CD14-positive monocyte (primary cell): ENCODE measurements at regions of chr9 and their contacts with region 1.

Region 1: DNA sequence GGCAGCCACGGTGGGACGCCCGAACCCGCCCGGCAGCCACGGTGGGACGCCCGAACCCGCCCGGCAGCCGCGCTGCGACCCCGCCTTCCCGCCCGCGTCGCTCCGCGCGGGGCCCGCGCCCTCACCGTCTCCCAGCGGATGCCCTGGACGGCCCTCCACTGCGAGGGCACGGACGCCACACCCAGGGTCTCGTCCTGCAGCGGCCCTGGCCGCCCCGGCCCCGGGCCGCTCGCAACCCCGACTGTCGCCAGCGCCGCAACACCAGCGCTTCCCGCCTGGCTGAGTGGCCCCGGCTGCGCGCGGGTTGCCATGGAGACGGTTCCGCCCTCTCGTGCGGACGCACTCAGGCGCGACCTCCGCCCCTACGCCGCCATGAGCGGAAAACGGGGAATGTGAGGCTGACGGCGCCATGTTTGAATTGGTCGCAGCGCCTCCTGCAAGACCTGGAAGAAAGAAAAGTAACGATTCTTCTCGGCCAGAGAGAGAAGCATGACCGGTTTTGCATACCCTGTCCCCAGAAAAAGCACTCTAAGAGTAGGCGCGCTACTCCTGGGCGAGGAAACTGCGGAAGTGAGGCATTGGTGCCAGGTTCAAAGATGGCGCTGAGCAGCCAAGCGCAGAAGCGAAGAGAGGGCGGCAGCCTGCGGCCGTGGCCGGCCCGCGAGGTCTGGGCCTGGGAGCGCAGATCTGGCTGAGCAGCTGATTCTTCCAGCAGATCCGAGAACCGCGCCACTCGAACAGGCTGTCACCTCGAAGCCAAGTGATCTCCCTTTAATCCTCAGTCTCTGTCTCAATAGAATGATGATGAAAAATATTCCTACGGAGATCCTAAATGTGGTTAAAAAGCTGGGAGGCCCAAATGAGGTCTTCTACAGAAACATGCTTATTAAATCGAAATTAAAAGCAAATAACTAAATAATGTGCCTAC is at the start of gene DYNC2I2:
- DNase-seq: peak; percentile 94 to 96 (median 96)
- H3K4me3 ChIP-seq: peak within 1 kb of the TSS; percentile 62 to 80 (median 77)
- H3K4me3 Mint-ChIP-seq: peak within 1 kb of the TSS; percentile 84 to 98
- H3K27ac ChIP-seq: peak within 1 kb of the TSS; percentile 93 to 98
- H3K27ac Mint-ChIP-seq: peak within 1 kb of the TSS; percentile 98 to 100 (median 99)
- H3K4me1 ChIP-seq: peaks cover 11 to 14% of the 10 kb centered on the region in 2 donors
- H3K4me1 Mint-ChIP-seq: peaks cover 7% of the 10 kb centered on the region
- H3K27me3 ChIP-seq: no peaks in the 10 kb centered on the region
- H3K27me3 Mint-ChIP-seq: peaks cover 1 to 7% (median 2%) of the 10 kb centered on the region in 3 donors
- CTCF ChIP-seq: no peak
- polyA plus RNA-seq, gene DYNC2I2: 1.5 to 2.1 (median 1.9) TPM

Region 2: GRCh38 chr9:128683340-128684278 is 26.9 kb after region 1 on chr9:
- intact Hi-C with region 1: loop called (anchors 2 kb)
- DNase-seq: peak; percentile 43 to 63 (median 56)
- H3K4me3 ChIP-seq: peak overlapping the region; percentile 84 to 100 (median 96)
- H3K4me3 Mint-ChIP-seq: peak overlapping the region; percentile 99 to 100
- H3K27ac ChIP-seq: peak overlapping the region; percentile 83 to 97
- H3K27ac Mint-ChIP-seq: peak overlapping the region; percentile 95 to 98 (median 97)
- H3K4me1 ChIP-seq: peaks cover 49 to 55% of the 10 kb centered on the region in 2 donors
- H3K4me1 Mint-ChIP-seq: peaks cover 50% of the 10 kb centered on the region
- H3K27me3 ChIP-seq: no peaks in the 10 kb centered on the region
- H3K27me3 Mint-ChIP-seq: peaks cover 0 to 3% (median 2%) of the 10 kb centered on the region in 3 donors
- CTCF ChIP-seq: no peak

Region 3: DNA sequence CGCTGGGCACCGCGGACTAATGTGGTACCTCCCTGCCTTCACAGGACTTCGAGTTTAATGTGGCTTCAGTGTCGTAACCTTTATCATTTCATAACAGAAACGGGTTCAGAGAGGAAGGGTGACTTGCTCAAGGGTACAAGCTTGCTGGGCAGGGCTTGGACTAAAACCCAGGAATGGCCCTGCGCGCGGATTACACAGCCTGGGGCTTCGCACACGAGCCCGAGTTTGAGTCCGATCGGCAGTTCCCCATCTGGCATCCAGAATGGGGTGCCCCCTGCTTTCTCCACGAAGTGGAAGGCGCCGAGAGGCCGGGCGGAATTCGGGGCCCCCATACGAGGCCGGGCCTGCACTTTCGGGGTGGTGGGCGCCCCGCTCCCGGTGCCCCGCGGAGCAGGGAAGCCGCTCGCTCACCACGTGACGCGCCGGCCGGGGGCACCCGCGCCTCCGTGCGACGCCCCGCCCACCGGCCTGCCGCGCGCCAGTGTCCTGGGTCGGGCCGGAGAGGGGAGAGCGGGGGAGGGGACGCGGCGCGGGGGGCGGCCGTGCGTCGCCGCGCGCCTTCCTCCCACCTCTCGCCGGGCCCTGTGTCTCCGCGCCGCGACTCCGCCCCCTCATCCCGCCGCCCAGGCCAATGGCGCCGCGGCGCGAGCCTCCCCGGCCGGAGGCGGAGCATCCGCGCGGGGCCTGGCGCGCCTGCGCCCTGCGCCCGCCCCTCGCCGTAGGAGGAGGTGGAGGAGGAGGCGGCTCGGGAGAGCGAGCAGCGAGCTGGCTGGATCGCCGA is 32.0 kb after region 1 on chr9 and contains the start of gene SET:
- intact Hi-C with region 1: loop called (anchors 2 kb)
- DNase-seq: peak; percentile 85 to 86 (median 86)
- H3K4me3 ChIP-seq: peak within 1 kb of the TSS; percentile 45 to 90 (median 90)
- H3K4me3 Mint-ChIP-seq: peak within 1 kb of the TSS; percentile 73 to 88
- H3K27ac ChIP-seq: peak within 1 kb of the TSS; percentile 85 to 87
- H3K27ac Mint-ChIP-seq: peak within 1 kb of the TSS; percentile 78 to 95 (median 92)
- H3K4me1 ChIP-seq: peaks cover 55 to 62% of the 10 kb centered on the region in 2 donors
- H3K4me1 Mint-ChIP-seq: peaks cover 59% of the 10 kb centered on the region
- H3K27me3 ChIP-seq: no peaks in the 10 kb centered on the region
- H3K27me3 Mint-ChIP-seq: peaks cover 0 to 3% (median 2%) of the 10 kb centered on the region in 3 donors
- CTCF ChIP-seq: no peak
- polyA plus RNA-seq, gene SET: 56.2 to 124 (median 114) TPM